ENCODE measurements at regions of chr11 and their contacts with region 1.

Region 1: DNA sequence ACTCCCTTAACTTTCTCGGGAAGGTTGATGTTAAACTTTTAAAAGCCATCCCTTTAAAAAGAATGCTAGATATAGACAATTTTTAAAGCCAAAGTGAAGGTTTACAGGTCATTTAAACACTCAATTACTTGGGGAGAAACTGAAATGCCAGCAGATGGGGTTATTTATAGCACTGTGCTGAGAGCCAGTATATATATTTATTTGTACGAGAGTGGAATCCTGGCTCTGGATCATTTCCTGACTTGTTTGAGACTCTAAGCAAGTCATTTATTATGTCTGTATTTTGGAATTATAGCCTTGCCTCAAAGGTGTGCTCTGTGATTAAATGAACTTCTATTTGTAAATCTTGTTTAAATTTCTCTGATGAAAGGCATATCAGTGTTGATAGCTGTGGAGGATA is 6.8 kb upstream of the ZBED5 start:
- DNase-seq: no peak
- ATAC-seq: peak in 3 of 4 donors; percentile 57 to 63 (median 62)
- H3K4me3 ChIP-seq: peak overlapping the region in 4 of 12 donors; percentile 2 to 22 (median 14)
- H3K27ac ChIP-seq: peak overlapping the region in 11 of 12 donors; percentile 22 to 98 (median 66)
- H3K4me1 ChIP-seq: peaks cover 0 to 60% (median 17%) of the 10 kb centered on the region in 12 donors
- H3K27me3 ChIP-seq: no peaks in the 10 kb centered on the region
- CTCF ChIP-seq: no peak
- POLR2A ChIP-seq: no peak

Region 2: DNA sequence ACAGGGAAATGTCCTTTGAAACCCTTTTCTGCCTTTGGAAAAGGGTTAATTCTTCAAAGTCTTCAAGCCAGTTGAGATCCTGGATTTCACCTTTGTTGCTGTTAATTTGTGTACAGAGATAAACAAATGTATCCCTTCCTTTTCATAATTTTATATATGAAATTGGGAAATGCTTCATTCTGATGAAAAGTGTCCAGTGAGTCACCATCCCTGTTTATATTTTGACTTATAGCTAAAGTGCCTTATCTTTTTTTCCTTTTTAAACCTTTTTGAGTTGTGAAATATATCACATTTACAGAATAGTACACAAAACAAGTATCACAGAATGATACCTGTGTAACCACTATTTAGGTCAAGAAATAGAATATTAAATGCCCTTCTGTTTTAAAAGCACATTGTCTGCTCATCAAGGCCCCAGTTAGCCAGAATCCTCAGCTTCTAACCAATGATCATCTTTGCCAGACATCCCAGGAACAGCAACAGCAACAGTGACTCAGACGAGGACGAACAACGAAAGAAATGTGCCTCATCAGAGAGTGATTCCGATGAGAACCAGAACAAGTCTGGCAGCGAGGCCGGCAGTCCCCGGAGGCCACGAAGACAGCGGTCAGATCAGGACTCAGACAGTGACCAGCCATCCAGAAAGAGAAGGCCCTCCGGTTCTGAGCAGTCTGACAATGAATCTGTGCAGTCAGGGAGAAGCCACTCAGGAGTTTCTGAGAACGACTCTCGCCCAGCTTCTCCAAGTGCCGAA is 86.3 kb before region 1 on chr11:
- intact Hi-C with region 1: no loop called
- DNase-seq: peak; percentile 69 to 87 (median 75)
- ATAC-seq: peak; percentile 77 to 95 (median 92)
- H3K4me3 ChIP-seq: no peak overlapping the region
- H3K27ac ChIP-seq: peak overlapping the region in 11 of 12 donors; percentile 56 to 87 (median 72)
- H3K4me1 ChIP-seq: peaks cover 5 to 29% (median 17%) of the 10 kb centered on the region in 12 donors
- H3K27me3 ChIP-seq: no peaks in the 10 kb centered on the region
- CTCF ChIP-seq: no peak
- POLR2A ChIP-seq: no peak

Region 3: DNA sequence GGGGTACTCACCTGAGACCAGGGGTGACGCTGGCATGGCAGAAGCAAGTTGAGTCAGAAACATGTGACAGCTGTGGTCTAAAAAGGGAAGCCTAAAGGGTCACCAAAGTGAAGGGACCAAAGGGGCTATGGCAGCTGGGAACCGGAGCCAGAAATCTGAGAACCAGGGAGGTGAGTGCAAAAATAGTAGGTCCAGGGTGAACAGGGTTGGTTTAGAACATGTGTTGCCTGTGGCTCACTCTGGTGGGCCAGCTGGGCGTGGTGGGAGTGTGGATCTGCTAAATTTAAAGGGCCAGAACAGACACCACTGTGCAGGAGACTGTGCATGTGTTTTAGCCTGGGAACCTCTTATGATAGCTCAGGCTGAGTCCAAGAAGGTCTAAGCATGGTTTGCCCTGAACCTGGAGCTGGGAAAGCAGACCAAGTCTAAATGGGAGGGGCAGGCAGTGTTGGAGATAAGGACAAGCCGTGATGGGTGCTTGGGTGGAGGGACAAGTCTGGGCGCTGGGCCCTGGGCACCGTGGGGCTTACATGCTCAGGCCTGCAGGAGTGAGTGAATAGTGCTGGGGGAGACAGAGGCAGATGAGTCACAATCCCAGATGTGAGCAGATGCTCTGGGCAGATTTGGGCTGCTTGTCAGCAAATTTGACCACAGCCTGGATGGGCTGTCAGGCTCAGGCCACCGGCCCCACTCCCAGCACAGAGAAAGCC is 34.6 kb after region 1 on chr11:
- intact Hi-C with region 1: loop called in 8 of 10 experiments (anchors 2 to 10 kb)
- DNase-seq: peak; percentile 45 to 81 (median 75)
- ATAC-seq: peak; percentile 21 to 77 (median 68)
- H3K4me3 ChIP-seq: peak overlapping the region in 1 of 12 donors; percentile 4
- H3K27ac ChIP-seq: peak overlapping the region; percentile 51 to 98 (median 90)
- H3K4me1 ChIP-seq: peaks cover 10 to 55% (median 33%) of the 10 kb centered on the region in 12 donors
- H3K27me3 ChIP-seq: no peaks in the 10 kb centered on the region
- CTCF ChIP-seq: no peak
- POLR2A ChIP-seq: no peak